Mammary epithelial cell (primary cell): ENCODE measurements at regions of chr3 and their contacts with region 1.

Region 1: GRCh38 chr3:132034486-132035464 is at the start of gene CPNE4:
- DNase-seq: peak; percentile 82
- H3K4me3 ChIP-seq: peak within 1 kb of the TSS; percentile 51 to 55 (median 55)
- H3K27ac ChIP-seq: no peak within 1 kb of the TSS
- H3K4me1 ChIP-seq: no peaks in the 10 kb centered on the region
- H3K27me3 ChIP-seq: peaks cover 10% of the 10 kb centered on the region
- CTCF ChIP-seq: peak; percentile 71 to 94
- total RNA-seq, gene CPNE4: 1.5 to 1.7 TPM

Region 2: DNA sequence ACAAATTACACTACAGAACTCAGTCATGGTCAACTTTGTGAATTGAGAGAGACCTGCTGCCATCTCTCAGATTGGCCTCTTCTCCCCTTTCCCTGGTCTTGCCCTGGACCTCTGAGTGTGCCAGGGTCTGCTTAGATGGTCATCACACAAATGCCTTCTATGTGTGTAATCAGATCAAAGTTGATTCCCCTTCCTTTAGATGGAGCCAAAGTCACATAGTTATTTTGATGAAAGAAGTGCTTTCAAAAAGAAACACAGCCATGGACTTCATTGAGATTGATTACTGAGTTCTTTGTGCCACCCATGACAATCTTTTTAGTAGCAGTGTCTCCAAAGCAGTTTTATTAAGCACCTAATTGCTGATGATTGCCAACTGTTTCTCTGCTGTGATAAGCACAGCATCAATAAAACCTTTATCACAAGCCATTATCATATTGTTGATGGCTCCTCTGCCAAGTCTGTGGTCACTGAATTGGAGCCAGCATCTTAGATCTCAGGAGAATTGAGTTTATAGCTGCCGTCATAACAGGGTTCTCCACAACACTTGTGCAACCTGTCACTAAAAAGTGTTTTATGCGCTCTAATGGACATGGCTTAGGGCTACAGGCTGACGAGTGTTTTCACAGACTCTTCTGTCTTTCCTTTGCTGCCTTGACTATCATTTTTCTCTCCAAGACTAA is 802.9 kb before region 1 on chr3:
- CTCF ChIA-PET with region 1: no interaction called
- dilution Hi-C with region 1: no loop called
- in situ Hi-C with region 1: no loop called
- intact Hi-C with region 1: loop called (anchors 10 kb)
- DNase-seq: no peak
- H3K4me3 ChIP-seq: no peak overlapping the region
- H3K27ac ChIP-seq: no peak overlapping the region
- H3K4me1 ChIP-seq: no peaks in the 10 kb centered on the region
- H3K27me3 ChIP-seq: no peaks in the 10 kb centered on the region
- CTCF ChIP-seq: peak in 1 of 2 donors; percentile 26

Region 3: DNA sequence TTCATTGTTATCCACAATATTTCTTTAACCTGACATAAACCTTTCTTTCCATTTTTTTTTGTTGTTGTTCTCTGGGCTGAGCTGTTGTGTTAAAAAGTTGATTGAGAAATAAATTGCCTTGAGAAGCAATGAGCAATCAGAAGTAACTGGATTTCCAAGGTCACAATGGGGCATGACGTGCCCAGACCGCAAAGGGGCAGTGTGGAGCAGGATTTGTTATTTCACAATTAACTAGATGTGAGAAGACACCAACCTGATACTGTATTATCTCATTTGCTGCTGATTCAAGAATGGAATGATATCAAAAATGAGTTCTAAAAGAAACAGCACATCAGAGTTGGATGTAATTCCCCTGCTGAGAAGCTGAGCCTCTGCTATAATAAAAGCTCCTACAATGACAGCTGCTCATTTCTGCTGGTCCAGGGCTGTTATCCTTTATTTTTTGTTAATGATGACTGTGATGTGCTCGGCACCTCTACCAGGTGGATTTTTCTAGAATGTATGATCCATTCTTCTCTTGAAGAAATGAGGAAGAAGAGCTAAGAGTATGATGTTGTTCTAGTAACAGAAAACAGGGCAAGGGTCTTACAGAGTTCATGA is 28.1 kb before region 1 on chr3:
- CTCF ChIA-PET with region 1: interaction called, 10 read pairs
- dilution Hi-C with region 1: no loop called
- in situ Hi-C with region 1: no loop called
- intact Hi-C with region 1: loop called (anchors 1 kb)
- DNase-seq: peak; percentile 55
- H3K4me3 ChIP-seq: no peak overlapping the region
- H3K27ac ChIP-seq: no peak overlapping the region
- H3K4me1 ChIP-seq: no peaks in the 10 kb centered on the region
- H3K27me3 ChIP-seq: no peaks in the 10 kb centered on the region
- CTCF ChIP-seq: peak; percentile 71 to 72

Region 4: DNA sequence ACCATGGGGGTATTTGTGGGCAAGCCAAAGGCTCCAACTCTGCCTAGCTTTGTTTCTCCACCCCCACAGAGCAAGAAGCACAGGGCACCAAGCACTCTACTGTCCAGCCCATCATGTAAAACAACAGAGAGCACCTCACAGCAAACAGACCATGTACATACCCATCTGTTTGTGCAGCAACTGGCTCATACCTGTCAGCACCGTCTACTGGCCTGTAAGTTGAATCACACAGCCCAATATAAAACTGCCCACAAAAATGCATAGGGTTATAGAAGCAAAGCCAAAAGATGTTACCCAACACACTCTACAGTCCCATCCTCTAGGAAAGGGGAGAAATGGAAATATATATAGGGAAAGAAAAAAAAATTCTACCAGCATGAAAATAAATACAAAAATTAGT is 139.7 kb after region 1 on chr3:
- CTCF ChIA-PET with region 1: no interaction called
- dilution Hi-C with region 1: no loop called
- in situ Hi-C with region 1: no loop called
- intact Hi-C with region 1: loop called (anchors 1 kb)
- DNase-seq: peak; percentile 66
- H3K4me3 ChIP-seq: no peak overlapping the region
- H3K27ac ChIP-seq: no peak overlapping the region
- H3K4me1 ChIP-seq: peaks cover 4% of the 10 kb centered on the region
- H3K27me3 ChIP-seq: no peaks in the 10 kb centered on the region
- CTCF ChIP-seq: peak; percentile 29 to 62

Region 5: GRCh38 chr3:132189601-132190000 is 154.8 kb after region 1 on chr3:
- CTCF ChIA-PET with region 1: interaction called, 3 read pairs
- dilution Hi-C with region 1: no loop called
- in situ Hi-C with region 1: loop called in 1 of 2 experiments (anchors 5 kb)
- intact Hi-C with region 1: no loop called
- DNase-seq: no peak
- H3K4me3 ChIP-seq: no peak overlapping the region
- H3K27ac ChIP-seq: no peak overlapping the region
- H3K4me1 ChIP-seq: no peaks in the 10 kb centered on the region
- H3K27me3 ChIP-seq: no peaks in the 10 kb centered on the region
- CTCF ChIP-seq: no peak

Region 6: GRCh38 chr3:132343018-132343612 is 308.3 kb after region 1 on chr3:
- CTCF ChIA-PET with region 1: no interaction called
- dilution Hi-C with region 1: no loop called
- in situ Hi-C with region 1: no loop called
- intact Hi-C with region 1: loop called (anchors 1 kb)
- DNase-seq: peak; percentile 41
- H3K4me3 ChIP-seq: no peak overlapping the region
- H3K27ac ChIP-seq: no peak overlapping the region
- H3K4me1 ChIP-seq: no peaks in the 10 kb centered on the region
- H3K27me3 ChIP-seq: no peaks in the 10 kb centered on the region
- CTCF ChIP-seq: peak; percentile 78 to 85